ENCODE measurements at regions of chr18 and their contacts with region 1.

Region 1: DNA sequence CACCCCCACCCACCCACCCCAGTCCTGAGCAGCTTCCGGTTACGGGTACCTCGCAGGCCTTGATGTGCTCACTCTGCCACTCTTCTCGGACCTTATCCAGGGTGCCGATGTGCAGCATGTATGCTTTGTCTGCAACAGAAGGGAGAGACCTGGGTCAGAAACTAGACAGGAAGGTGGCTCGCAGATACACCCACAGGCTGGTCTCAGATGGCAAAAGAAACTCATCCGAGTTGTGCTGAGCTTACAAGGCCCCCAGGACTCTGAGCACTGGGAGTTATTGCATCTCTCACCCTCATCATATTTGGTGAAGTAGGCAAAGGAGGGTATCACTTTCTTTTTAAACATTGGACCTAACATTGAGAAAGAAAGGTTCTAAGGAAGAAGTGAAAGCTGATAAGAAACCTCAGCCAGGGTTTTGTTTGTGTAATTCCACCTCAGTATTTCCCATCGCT is 30.6 kb upstream of the EPG5 start:
- DNase-seq: no peak
- H3K4me3 ChIP-seq: no peak overlapping the region
- CTCF ChIP-seq: no peak

Region 2: DNA sequence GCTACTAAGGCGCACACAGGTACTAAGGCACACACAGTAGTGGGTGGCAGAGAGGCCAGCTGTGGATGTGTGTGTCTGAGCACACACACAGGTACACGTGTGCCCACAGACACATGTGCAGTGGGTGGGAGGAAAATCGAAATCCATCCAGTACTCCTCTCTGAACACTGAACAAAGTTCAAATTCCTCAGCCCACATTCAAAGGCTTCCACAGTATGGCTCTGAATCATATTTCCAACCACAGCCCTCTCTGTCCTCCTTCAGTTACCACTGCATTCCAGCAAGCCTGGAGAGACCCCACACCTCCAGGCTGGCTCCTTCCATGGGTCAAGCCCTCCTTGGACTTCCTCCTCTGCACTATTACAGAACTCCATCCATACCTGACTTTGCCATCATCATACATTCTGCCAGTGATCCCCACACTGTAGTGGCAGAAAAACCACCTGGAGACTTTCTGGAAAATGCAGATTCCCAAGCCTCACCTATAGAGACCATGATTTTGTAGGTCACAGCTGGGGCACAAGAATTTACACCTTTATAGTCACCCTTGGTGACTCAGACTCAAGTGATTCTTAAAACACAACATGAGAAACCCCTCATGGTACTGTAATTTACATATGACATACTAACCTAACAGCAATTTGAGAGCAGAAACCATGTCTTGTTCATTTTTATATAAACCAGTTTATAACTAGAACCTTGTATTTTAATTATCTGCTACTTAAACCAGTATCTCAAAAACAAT is 62.0 kb before region 1 on chr18:
- in situ Hi-C with region 1: no loop called
- DNase-seq: peak; percentile 64
- H3K4me3 ChIP-seq: no peak overlapping the region
- CTCF ChIP-seq: no peak

Region 3: GRCh38 chr18:46051731-46052461 is 54.2 kb after region 1 on chr18:
- in situ Hi-C with region 1: loop called (anchors 5 kb)
- DNase-seq: no peak
- H3K4me3 ChIP-seq: no peak overlapping the region
- CTCF ChIP-seq: no peak